MCF 10A (cell line): ENCODE measurements at regions of chrX and their contacts with region 1.

Region 1: DNA sequence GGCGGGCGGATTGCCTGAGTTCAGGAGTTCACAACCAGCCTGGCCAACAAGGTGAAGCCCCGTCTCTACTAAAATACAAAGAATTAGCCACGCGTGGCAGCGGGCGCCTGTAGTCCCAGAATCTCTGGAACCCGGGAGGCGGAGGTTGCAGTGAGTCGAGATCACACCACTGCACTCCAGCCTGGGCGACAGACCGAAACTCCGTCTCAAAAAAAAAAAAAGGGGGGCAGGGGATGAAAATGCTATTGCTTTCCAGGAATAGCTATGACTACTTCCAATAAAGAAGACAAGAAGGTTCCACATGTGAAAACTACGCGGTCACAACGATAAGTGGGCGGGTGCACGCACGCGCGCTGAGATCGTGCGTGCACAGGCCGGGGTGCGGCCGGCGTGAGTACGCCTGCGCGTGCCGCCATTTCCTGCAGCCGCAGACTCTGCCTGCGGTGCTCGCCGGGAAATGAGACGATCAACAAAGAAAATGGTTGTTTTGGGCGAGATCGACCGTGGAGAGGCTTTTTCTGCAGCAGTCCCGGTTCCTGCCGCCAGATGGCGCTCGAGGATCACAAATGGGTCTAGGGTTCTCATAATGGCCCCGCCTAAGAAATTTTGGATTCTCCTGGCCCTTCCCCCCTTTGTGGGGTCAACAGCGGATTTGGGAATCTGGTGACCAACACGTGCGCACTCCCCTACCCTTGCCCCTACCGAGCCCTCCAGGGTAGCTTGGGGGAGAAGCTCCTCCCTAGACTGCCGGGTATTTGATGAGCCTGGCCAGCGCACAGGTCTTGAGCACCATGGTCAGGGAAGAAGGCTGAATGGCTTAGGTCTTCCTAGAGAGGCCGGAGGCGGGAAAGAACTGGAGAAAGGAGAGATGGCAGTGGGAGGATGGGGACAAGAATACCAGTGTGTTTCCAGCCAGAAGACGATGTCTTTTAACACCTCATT is 35.1 kb downstream of the PNMA5 start:
- DNase-seq: peak; percentile 85
- H3K4me3 Mint-ChIP-seq: peak overlapping the region; percentile 72
- H3K27ac Mint-ChIP-seq: peak overlapping the region; percentile 83
- H3K4me1 Mint-ChIP-seq: peaks cover 4% of the 10 kb centered on the region
- H3K27me3 Mint-ChIP-seq: peaks cover 20% of the 10 kb centered on the region
- CTCF ChIP-seq: peak; percentile 90

Region 2: GRCh38 chrX:152946681-152947080 is 12.1 kb before region 1 on chrX:
- CTCF ChIA-PET with region 1: interaction called, 13 read pairs
- POLR2A ChIA-PET with region 1: interaction called, 10 read pairs
- intact Hi-C with region 1: no loop called
- DNase-seq: no peak
- H3K4me3 Mint-ChIP-seq: no peak overlapping the region
- H3K27ac Mint-ChIP-seq: no peak overlapping the region
- H3K4me1 Mint-ChIP-seq: no peaks in the 10 kb centered on the region
- H3K27me3 Mint-ChIP-seq: peaks cover 24% of the 10 kb centered on the region
- CTCF ChIP-seq: no peak

Region 3: DNA sequence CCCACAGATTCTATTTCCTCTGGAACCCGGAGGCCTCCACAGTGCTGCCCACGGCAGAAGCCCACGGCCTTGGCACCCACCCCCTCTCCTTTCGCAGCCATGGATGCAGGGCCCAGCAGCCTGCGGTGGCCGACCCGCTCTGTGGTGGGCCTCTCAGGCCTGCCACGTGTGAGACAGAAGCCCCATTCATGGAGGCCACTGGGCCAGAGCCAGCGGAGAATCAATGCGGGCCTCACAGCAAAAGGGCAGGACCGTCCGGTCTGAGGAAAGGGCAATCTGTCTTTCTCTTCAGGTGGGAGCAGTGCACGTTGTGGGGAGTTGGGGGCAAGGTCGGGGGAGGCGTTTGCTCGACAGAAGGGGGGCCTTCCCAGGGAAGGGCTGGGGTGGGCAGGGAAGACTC is 520.0 kb after region 1 on chrX:
- CTCF ChIA-PET with region 1: no interaction called
- POLR2A ChIA-PET with region 1: no interaction called
- intact Hi-C with region 1: no loop called
- DNase-seq: no peak
- H3K4me3 Mint-ChIP-seq: no peak overlapping the region
- H3K27ac Mint-ChIP-seq: no peak overlapping the region
- H3K4me1 Mint-ChIP-seq: no peaks in the 10 kb centered on the region
- H3K27me3 Mint-ChIP-seq: no peaks in the 10 kb centered on the region
- CTCF ChIP-seq: no peak

Region 4: DNA sequence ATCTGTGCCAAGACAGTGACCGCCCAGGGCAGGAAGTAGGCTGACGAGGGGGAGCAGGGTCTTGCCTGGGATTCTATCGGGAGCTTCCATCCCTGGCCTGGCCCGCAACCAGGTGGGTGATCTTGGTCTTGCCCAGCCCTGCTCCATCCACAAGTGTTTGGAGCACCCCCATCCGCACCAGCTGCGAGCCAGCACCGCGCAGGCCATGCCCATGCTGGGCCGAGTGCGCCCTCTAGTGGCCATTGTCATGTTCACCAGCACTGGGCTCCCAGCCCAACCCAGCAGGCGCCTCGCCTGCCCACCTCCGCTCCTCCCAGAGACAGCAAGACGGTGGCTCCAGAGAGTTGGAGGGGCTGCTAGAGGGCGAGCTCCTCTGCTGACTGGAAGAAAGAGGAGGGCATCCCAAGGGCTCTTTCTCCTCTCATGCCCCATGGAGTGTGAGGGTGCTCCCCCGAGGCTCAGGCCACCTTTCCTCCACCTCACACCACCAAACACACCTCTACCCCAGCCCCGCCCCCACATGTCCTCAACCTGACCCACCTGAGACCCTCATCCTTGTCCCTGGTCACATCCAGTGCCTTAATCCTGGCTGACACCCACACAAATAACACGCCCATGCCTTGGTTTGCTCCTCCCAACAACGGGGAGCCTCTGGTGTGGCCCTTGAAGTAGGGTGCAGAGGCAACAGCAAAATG is 548.8 kb after region 1 on chrX:
- CTCF ChIA-PET with region 1: interaction called, 11 read pairs
- POLR2A ChIA-PET with region 1: interaction called, 3 read pairs
- intact Hi-C with region 1: no loop called
- DNase-seq: peak; percentile 68
- H3K4me3 Mint-ChIP-seq: no peak overlapping the region
- H3K27ac Mint-ChIP-seq: no peak overlapping the region
- H3K4me1 Mint-ChIP-seq: no peaks in the 10 kb centered on the region
- H3K27me3 Mint-ChIP-seq: no peaks in the 10 kb centered on the region
- CTCF ChIP-seq: peak; percentile 77

Region 5: GRCh38 chrX:153947009-153947769 is 988.4 kb after region 1 on chrX:
- CTCF ChIA-PET with region 1: interaction called, 4 read pairs
- POLR2A ChIA-PET with region 1: no interaction called
- intact Hi-C with region 1: loop called (anchors 1 kb)
- DNase-seq: peak; percentile 84
- H3K4me3 Mint-ChIP-seq: no peak overlapping the region
- H3K27ac Mint-ChIP-seq: no peak overlapping the region
- H3K4me1 Mint-ChIP-seq: no peaks in the 10 kb centered on the region
- H3K27me3 Mint-ChIP-seq: no peaks in the 10 kb centered on the region
- CTCF ChIP-seq: peak; percentile 92